PC-9 (cell line): ENCODE measurements at regions of chr2 and their contacts with region 1.

Region 1: GRCh38 chr2:64767670-64768468 is 114.2 kb upstream of the SERTAD2 start:
- DNase-seq: peak; percentile 84 to 89
- H3K4me3 ChIP-seq: peak overlapping the region; percentile 66
- H3K27ac ChIP-seq: peak overlapping the region; percentile 84
- H3K4me1 ChIP-seq: peaks cover 45% of the 10 kb centered on the region
- H3K27me3 ChIP-seq: no peaks in the 10 kb centered on the region
- CTCF ChIP-seq: no peak

Region 2: DNA sequence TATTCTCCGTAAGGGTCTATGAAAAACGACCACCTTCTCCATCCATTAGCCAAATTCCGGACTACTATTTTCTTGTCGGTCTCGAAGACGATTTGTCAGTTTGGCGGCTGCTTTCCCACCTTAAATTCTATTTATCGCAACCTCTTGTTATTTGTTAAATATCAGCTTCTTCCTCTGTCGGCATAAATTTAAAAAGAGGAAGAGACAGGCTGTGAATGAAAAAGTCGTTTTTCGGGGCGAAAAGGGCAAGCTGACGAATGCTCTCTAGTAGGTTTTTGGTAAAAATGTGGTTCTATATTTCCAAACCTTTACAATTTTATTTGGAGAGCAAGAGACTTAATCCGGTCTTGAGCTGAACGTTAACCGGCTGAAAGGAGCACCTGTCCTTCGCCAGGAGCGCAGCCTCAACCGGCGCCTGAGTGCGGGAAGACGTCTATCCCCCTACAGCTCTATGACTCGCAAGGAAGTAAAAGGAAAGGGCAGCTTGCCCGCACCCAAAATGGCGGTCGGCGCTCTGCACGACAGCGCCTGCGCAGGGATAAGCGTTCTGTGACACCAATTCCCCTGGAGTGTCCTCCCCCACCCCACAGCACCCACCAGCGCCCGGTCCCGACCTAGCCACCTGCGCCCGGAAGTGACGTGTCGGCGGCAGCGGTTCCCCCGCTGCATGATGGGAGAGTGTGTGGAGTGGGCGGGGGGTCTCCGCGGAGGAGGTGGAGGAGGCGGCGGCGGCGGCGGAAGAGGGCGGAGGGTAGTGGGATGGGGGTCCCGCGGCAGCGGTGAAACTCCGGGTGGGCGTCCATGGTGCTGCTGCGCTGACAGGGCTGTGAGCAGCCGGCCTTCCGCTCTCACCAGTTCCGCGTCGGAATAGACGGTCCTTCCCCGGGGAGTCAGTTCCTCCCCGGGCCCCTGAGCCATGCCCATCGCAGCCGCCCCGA is 243.9 kb before region 1 on chr2 and contains the start of gene AFTPH:
- CTCF ChIA-PET with region 1: no interaction called
- POLR2A ChIA-PET with region 1: no interaction called
- intact Hi-C with region 1: loop called (anchors 10 kb)
- DNase-seq: peak; percentile 98 to 99
- H3K4me3 ChIP-seq: peak within 1 kb of the TSS; percentile 67
- H3K27ac ChIP-seq: peak within 1 kb of the TSS; percentile 72
- H3K4me1 ChIP-seq: peaks cover 18% of the 10 kb centered on the region
- H3K27me3 ChIP-seq: no peaks in the 10 kb centered on the region
- CTCF ChIP-seq: no peak
- total RNA-seq, gene AFTPH: 34.4 and 40.5 TPM in 2 replicates

Region 3: DNA sequence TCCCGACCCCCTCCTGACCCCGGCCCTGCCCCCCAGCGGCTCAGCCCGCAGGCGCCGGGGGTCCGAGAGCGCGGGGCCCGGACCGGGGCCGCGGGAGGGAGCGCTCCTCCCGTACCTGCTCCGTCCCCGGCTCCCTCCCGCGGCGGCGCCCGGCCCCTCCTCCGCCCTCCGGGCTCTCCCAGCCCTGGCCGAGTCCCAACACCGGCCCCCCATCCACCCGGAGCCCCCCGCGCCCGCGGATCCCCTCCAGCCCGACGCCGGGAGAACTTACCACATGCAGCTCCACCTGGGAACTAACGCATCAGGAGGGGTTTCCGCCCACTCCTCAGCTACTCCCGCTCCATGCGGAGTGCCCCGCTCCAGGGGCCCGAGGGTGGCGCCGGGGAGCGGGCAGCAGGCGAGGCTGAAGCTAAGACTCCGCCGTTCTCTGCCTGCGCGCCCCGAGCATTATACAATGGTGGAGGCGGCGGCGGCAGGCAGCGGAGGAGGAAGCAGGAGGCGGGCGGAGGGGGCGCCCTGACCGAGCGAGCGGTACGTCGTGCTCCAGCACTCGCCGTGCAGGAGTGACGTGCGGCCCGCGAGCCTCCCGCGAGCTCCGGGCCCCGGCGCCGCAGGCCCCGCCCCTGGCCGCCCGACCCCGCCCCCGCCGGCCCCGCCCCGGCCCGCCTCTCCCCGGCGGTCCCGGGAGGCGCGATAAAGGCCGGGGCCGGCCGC is 114.4 kb before region 1 on chr2 and contains the start of gene SERTAD2:
- CTCF ChIA-PET with region 1: interaction called, 3 read pairs
- POLR2A ChIA-PET with region 1: interaction called, 8 read pairs
- intact Hi-C with region 1: loop called (anchors 1 kb)
- DNase-seq: peak; percentile 70 to 90
- H3K4me3 ChIP-seq: peak within 1 kb of the TSS; percentile 98
- H3K27ac ChIP-seq: peak within 1 kb of the TSS; percentile 87
- H3K4me1 ChIP-seq: peaks cover 56% of the 10 kb centered on the region
- H3K27me3 ChIP-seq: no peaks in the 10 kb centered on the region
- CTCF ChIP-seq: peak; percentile 41; the same call in 1 of the 2 replicates
- total RNA-seq, gene SERTAD2: 27.3 and 31.4 TPM in 2 replicates

Region 4: GRCh38 chr2:64779117-64779690 is 11.3 kb after region 1 on chr2:
- CTCF ChIA-PET with region 1: interaction called, 20 read pairs
- POLR2A ChIA-PET with region 1: interaction called, 6 read pairs
- intact Hi-C with region 1: loop called (anchors 1 kb)
- DNase-seq: peak; percentile 71 to 99
- H3K4me3 ChIP-seq: no peak overlapping the region
- H3K27ac ChIP-seq: peak overlapping the region; percentile 60
- H3K4me1 ChIP-seq: peaks cover 62% of the 10 kb centered on the region
- H3K27me3 ChIP-seq: no peaks in the 10 kb centered on the region
- CTCF ChIP-seq: no peak

Region 5: GRCh38 chr2:64807417-64807816 is 39.5 kb after region 1 on chr2:
- CTCF ChIA-PET with region 1: no interaction called
- POLR2A ChIA-PET with region 1: no interaction called
- intact Hi-C with region 1: loop called (anchors 5 kb)
- DNase-seq: peak; percentile 74 to 91
- H3K4me3 ChIP-seq: no peak overlapping the region
- H3K27ac ChIP-seq: no peak overlapping the region
- H3K4me1 ChIP-seq: peaks cover 12% of the 10 kb centered on the region
- H3K27me3 ChIP-seq: no peaks in the 10 kb centered on the region
- CTCF ChIP-seq: no peak

Region 6: DNA sequence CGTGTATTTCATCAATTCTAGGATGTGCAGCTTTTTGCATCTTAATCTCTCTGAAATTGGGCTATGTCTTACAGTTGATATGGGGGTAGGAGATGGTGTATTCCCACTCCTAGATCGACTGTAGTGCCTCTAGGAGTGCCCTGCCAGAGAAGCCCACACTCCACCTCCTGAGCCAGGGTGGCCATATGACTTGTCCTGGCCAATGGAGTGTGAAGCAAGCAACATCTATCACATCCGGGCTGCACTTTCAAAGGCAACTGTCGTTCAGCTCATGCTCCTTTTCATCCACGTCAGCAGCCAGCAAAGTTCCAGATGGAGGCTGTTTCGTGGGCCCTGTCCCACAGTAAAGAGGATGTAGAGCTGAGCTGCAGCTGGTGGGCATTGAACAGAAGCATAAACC is 72.0 kb after region 1 on chr2:
- CTCF ChIA-PET with region 1: no interaction called
- POLR2A ChIA-PET with region 1: interaction called, 6 read pairs
- intact Hi-C with region 1: loop called (anchors 2 kb)
- DNase-seq: no peak
- H3K4me3 ChIP-seq: no peak overlapping the region
- H3K27ac ChIP-seq: peak overlapping the region; percentile 87
- H3K4me1 ChIP-seq: peaks cover 59% of the 10 kb centered on the region
- H3K27me3 ChIP-seq: no peaks in the 10 kb centered on the region
- CTCF ChIP-seq: no peak